ENCODE measurements at regions of chr16 and their contacts with region 1.

Region 1: DNA sequence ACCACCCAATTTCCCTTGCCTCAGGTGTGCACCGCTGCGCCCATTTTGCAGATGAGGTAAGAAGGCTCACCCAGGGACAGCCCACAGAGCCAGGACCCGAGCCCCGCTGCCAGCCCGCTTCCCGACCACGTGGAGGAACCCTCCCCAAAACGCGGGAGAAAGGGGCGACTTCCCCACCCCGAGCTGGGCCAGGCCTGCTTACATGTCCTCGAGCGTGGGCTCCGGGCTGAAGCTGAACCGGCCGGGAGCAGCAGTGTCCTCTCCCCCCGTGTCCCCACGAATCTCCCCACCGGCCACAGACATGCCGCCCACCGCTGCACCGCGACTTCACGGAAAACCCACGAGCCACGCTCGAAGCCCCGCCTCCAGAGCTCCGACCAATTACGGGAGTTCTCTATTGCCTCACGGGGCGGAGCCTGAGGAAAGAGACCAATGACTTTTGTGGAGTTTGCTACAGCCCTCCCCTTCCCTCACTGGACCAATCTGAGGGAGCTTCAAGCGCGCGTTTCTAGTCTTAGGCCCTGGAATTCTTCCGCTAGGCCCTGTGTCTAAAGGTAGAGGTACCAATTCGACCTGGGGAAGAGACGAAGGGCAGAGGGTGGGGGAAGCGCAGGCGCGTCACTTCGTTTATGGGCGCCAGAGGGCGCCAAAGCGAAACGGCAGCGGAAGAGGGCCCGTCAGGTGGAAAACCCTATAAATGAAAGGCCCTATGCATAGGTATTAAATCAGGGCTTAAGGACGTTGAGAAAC is at the start of gene DCTPP1:
- DNase-seq: peak; percentile 97
- H3K4me3 Mint-ChIP-seq: no peak within 1 kb of the TSS
- H3K27ac Mint-ChIP-seq: no peak within 1 kb of the TSS
- H3K4me1 Mint-ChIP-seq: peaks cover 17% of the 10 kb centered on the region
- H3K27me3 Mint-ChIP-seq: no peaks in the 10 kb centered on the region
- CTCF ChIP-seq: peak; percentile 92
- total RNA-seq, gene DCTPP1: 120 and 124 TPM in 2 replicates

Region 2: DNA sequence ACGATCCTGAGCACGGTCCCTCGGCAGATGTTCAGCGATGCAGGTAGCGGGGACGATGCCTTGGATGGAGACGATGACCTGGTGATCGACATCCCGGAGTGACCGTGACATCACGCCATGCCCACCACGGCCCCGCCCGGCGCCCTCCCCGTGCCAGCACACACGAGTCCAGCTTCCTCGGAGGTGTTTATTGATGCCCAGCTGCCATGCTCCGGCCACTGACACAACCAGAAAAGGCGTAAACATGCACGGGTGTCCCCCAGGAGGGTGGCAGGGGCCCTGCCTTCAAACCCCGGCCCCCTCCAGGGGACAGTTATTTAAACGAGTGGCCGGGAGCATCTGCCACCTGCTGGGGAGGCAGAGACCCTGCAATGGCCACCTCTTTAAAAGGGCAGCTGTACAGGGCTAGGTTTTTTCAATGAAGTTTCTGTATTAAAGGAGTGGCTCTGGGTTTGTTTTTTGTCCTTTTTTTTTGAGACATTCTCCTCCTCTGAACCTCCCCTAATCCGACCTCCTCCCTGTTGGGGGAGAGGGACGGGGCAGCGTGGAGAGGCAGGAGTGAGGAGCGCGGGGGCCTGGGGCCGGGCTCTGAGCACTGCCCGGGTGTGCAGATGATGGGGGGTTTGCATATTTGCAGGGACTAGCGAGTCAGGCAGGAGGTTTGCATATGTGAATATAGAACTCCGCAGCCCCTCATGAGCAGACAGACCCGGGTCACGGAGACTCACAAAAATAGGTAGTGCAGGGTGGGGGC is 424.3 kb before region 1 on chr16:
- CTCF ChIA-PET with region 1: no interaction called
- intact Hi-C with region 1: no loop called
- DNase-seq: peak; percentile 69
- H3K4me3 Mint-ChIP-seq: no peak overlapping the region
- H3K27ac Mint-ChIP-seq: no peak overlapping the region
- H3K4me1 Mint-ChIP-seq: peaks cover 6% of the 10 kb centered on the region
- H3K27me3 Mint-ChIP-seq: peaks cover 8% of the 10 kb centered on the region
- CTCF ChIP-seq: peak; percentile 87

Region 3: GRCh38 chr16:30417529-30418349 is 12.1 kb before region 1 on chr16:
- CTCF ChIA-PET with region 1: interaction called, 33 read pairs
- intact Hi-C with region 1: no loop called
- DNase-seq: peak; percentile 94
- H3K4me3 Mint-ChIP-seq: peak overlapping the region; percentile 64
- H3K27ac Mint-ChIP-seq: no peak overlapping the region
- H3K4me1 Mint-ChIP-seq: peaks cover 26% of the 10 kb centered on the region
- H3K27me3 Mint-ChIP-seq: no peaks in the 10 kb centered on the region
- CTCF ChIP-seq: peak; percentile 24

Region 4: DNA sequence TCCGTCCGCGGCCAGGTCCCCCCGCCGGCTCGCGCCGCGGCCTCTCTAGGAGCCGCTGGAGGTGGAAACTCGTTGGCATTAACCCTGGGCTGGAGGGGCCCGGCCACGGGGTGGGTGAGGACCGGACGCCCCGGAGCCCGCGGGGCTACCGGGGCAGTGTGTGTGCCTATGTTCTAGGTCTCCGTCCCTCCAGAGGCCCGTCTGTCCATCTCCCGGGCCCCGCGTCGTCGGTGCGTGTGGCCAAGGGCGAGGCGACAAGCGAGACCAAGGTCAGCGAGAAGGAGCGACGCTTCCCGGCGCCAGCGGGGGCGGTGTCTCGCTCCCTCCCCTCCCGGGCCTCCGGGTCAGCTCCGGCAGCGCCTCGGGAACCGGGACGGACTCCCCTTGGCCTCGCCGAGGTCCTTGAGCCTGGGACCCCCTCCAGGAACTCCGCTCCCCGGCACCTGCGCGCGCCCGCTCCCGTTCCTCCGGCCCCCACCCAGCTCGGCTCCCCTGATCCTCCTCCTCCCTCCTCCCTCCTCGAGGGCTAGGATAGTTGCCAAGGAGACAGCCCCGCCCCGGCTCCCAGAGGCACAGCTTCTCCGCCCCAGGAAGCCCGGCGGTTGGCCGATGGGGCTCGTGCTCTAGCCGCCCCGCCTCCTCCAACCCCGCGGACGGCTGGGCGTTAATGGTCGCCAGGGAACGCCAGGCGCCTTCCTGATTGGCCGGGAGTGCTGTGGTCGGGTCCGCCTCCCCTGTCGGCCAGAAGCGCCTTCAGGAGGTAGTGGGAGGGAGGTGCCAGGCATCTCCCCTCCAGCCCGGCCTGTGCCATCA is 97.2 kb after region 1 on chr16:
- CTCF ChIA-PET with region 1: interaction called, 14 read pairs
- intact Hi-C with region 1: no loop called
- DNase-seq: peak; percentile 99
- H3K4me3 Mint-ChIP-seq: peak overlapping the region; percentile 83
- H3K27ac Mint-ChIP-seq: peak overlapping the region; percentile 76
- H3K4me1 Mint-ChIP-seq: peaks cover 26% of the 10 kb centered on the region
- H3K27me3 Mint-ChIP-seq: no peaks in the 10 kb centered on the region
- CTCF ChIP-seq: peak; percentile 47

Region 5: DNA sequence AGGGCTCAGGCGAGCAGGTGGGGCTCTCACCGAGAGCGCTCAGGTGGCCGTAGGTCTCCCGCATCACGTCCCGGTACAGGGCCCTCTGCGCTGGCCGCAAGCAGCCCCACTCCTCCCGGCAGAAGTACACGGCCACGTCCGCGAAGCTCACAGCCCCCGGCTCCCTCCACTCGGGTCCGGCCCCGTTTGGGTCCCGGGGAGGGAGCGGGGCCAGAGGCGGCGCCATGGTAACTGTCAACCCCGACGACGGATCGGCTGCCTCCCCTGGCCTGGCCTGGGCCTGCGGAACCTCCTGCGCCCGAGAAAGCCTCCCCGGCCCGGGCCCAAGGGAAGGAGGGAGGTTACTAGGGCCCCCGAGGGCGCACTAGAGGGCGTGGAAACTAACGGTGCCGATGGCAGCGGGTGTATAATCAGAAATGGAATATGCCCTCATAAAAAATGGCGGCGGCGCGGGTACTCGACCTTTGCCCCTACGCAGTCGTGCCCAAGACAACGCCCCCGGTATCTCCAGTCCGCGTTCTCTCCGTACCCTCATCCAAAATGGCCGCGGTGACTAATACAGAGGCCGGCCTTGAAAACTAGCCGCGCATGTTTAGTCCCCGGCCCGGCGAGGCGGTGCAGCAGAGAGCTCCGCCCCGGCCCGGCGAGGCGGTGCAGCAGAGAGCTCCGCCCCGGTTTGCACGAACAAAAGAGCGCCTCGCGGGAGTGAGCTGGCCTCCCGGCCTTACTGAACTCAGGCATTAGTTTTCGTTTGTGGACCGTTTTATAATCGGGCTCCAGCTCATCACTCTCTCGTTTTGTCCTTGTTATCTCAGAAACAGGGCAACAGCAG is 128.3 kb after region 1 on chr16 and contains the start of gene ZNF764:
- CTCF ChIA-PET with region 1: interaction called, 23 read pairs
- intact Hi-C with region 1: no loop called
- DNase-seq: peak; percentile 98
- H3K4me3 Mint-ChIP-seq: peak within 1 kb of the TSS; percentile 90
- H3K27ac Mint-ChIP-seq: peak within 1 kb of the TSS; percentile 79
- H3K4me1 Mint-ChIP-seq: peaks cover 20% of the 10 kb centered on the region
- H3K27me3 Mint-ChIP-seq: no peaks in the 10 kb centered on the region
- CTCF ChIP-seq: no peak
- total RNA-seq, gene ZNF764: 16.5 and 16.7 TPM in 2 replicates

Region 6: GRCh38 chr16:30585400-30586189 is 155.7 kb after region 1 on chr16 and contains the start of gene ZNF785:
- CTCF ChIA-PET with region 1: interaction called, 7 read pairs
- intact Hi-C with region 1: loop called (anchors 10 kb)
- DNase-seq: peak; percentile 98
- H3K4me3 Mint-ChIP-seq: peak within 1 kb of the TSS; percentile 86
- H3K27ac Mint-ChIP-seq: peak within 1 kb of the TSS; percentile 91
- H3K4me1 Mint-ChIP-seq: no peaks in the 10 kb centered on the region
- H3K27me3 Mint-ChIP-seq: no peaks in the 10 kb centered on the region
- CTCF ChIP-seq: peak; percentile 36
- total RNA-seq, gene ZNF785: 22.2 and 22.9 TPM in 2 replicates

Region 7: GRCh38 chr16:30615358-30616091 is 185.7 kb after region 1 on chr16:
- CTCF ChIA-PET with region 1: interaction called, 22 read pairs
- intact Hi-C with region 1: no loop called
- DNase-seq: peak; percentile 80
- H3K4me3 Mint-ChIP-seq: no peak overlapping the region
- H3K27ac Mint-ChIP-seq: no peak overlapping the region
- H3K4me1 Mint-ChIP-seq: peaks cover 14% of the 10 kb centered on the region
- H3K27me3 Mint-ChIP-seq: peaks cover 6% of the 10 kb centered on the region
- CTCF ChIP-seq: peak; percentile 81

Region 8: DNA sequence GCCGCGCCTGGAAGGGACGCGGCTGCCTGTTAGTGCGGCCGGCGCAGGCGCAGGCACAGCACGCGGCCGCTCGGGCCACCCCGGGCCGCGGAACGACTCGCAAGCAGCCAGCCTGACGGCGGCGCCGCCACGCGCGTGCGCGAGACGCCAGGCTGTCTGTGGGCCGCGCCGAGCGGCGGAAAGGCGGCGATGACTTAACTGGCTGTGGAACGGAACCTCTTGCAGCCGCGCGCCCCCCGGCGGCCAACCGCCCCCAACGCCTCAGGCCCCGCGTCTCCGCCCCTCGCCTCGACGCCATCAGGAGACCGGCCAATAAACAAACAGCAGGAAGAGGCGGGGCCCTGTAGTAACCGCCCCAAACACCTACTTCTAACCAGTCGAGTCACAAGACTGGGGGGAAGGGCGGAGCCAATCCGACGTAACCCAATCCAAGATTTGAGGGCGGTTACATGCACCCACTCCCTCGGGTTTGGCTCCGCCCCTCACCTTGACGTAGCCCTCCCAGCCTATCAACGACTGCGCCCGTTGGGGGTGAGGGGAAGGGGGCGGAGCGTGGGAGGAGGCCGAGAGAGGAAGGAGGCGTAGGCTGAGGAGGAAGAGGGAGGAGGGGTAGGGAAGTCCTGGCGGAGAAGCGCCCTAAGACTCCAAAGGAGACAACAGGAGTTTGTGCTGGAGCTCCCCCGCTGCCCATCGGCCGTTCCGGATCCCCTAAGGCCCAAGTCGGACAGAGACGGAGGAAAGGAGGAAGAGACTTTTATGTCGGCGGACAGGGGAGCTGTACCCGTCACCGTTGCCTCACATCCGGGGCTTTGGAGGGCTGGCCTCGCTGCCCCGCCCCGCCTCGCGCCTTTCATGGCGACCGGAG is 228.2 kb after region 1 on chr16 and contains the start of gene FBRS:
- CTCF ChIA-PET with region 1: interaction called, 11 read pairs
- intact Hi-C with region 1: no loop called
- DNase-seq: peak; percentile 100
- H3K4me3 Mint-ChIP-seq: peak within 1 kb of the TSS; percentile 91
- H3K27ac Mint-ChIP-seq: peak within 1 kb of the TSS; percentile 99
- H3K4me1 Mint-ChIP-seq: peaks cover 28% of the 10 kb centered on the region
- H3K27me3 Mint-ChIP-seq: no peaks in the 10 kb centered on the region
- CTCF ChIP-seq: peak; percentile 84
- total RNA-seq, gene FBRS: 113 and 114 TPM in 2 replicates

Measured in Calu3 (cell line).